ENCODE measurements at regions of chr11 and their contacts with region 1.

Region 1: GRCh38 chr11:62169935-62170548 is 20.0 kb upstream of the SCGB1D1 start:
- DNase-seq: no peak
- H3K4me3 ChIP-seq: no peak overlapping the region
- H3K27ac ChIP-seq: no peak overlapping the region
- H3K4me1 ChIP-seq: no peaks in the 10 kb centered on the region
- H3K27me3 ChIP-seq: peaks cover 2% of the 10 kb centered on the region
- CTCF ChIP-seq: no peak
- POLR2A ChIP-seq: no peak

Region 2: DNA sequence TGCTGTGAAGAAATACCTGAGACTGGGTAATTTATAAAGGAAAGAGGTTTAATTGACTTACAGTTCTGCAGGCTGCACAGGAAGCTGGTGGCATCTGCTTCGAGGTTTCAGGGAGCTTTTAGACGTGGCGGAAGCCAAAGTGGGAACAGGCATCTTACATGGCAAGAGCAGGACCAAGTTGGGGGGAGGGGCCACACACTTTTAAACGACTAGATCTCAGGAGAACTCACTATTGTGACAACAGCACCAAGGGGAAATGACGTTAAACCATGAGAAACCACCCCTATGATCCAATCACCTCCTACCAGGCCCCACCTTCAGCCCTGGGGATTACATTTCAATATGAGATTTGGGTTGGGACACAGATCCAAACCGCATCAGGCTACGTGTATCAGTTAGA is 139.9 kb after region 1 on chr11:
- intact Hi-C with region 1: loop called (anchors 5 kb)
- DNase-seq: no peak
- H3K4me3 ChIP-seq: no peak overlapping the region
- H3K27ac ChIP-seq: no peak overlapping the region
- H3K4me1 ChIP-seq: no peaks in the 10 kb centered on the region
- H3K27me3 ChIP-seq: no peaks in the 10 kb centered on the region
- CTCF ChIP-seq: no peak
- POLR2A ChIP-seq: no peak

Measured in prostate gland (tissue), 2 donors.